CD4-positive, alpha-beta memory T cell (primary cell): ENCODE measurements at regions of chr19 and their contacts with region 1.

Region 1: GRCh38 chr19:7535035-7535992 is at the start of gene PNPLA6:
- DNase-seq: peak; percentile 89 to 93 (median 91)
- H3K4me3 ChIP-seq: peak within 1 kb of the TSS; percentile 80 to 93
- H3K4me3 Mint-ChIP-seq: peak within 1 kb of the TSS; percentile 90 to 98 (median 94)
- H3K27ac ChIP-seq: peak within 1 kb of the TSS; percentile 76
- H3K27ac Mint-ChIP-seq: peak within 1 kb of the TSS; percentile 93 to 98 (median 94)
- H3K4me1 ChIP-seq: peaks cover 25% of the 10 kb centered on the region
- H3K4me1 Mint-ChIP-seq: peaks cover 10 to 45% (median 26%) of the 10 kb centered on the region in 4 donors
- H3K27me3 ChIP-seq: no peaks in the 10 kb centered on the region
- H3K27me3 Mint-ChIP-seq: no peaks in the 10 kb centered on the region
- total RNA-seq, gene PNPLA6: 168 to 169 TPM

Region 2: GRCh38 chr19:7394731-7395359 is 140.5 kb before region 1 on chr19:
- CTCF ChIA-PET with region 1: no interaction called
- POLR2A ChIA-PET with region 1: no interaction called
- intact Hi-C with region 1: loop called (anchors 10 kb)
- DNase-seq: peak; percentile 88 to 95 (median 90)
- H3K4me3 ChIP-seq: peak overlapping the region in 1 of 2 donors; percentile 57
- H3K4me3 Mint-ChIP-seq: peak overlapping the region; percentile 84 to 92 (median 87)
- H3K27ac ChIP-seq: peak overlapping the region; percentile 58
- H3K27ac Mint-ChIP-seq: peak overlapping the region; percentile 78 to 96 (median 93)
- H3K4me1 ChIP-seq: peaks cover 46% of the 10 kb centered on the region
- H3K4me1 Mint-ChIP-seq: peaks cover 26 to 56% (median 34%) of the 10 kb centered on the region in 4 donors
- H3K27me3 ChIP-seq: no peaks in the 10 kb centered on the region
- H3K27me3 Mint-ChIP-seq: no peaks in the 10 kb centered on the region

Region 3: GRCh38 chr19:7515645-7516151 is 19.6 kb before region 1 on chr19 and contains the start of gene ZNF358:
- CTCF ChIA-PET with region 1: no interaction called
- POLR2A ChIA-PET with region 1: interaction called, 94 read pairs
- intact Hi-C with region 1: loop called (anchors 2 kb)
- DNase-seq: no peak
- H3K4me3 ChIP-seq: peak within 1 kb of the TSS in 1 of 2 donors; percentile 32
- H3K4me3 Mint-ChIP-seq: peak within 1 kb of the TSS; percentile 68 to 91 (median 85)
- H3K27ac ChIP-seq: no peak within 1 kb of the TSS
- H3K27ac Mint-ChIP-seq: peak within 1 kb of the TSS in 6 of 7 donors; percentile 38 to 95 (median 82)
- H3K4me1 ChIP-seq: peaks cover 10% of the 10 kb centered on the region
- H3K4me1 Mint-ChIP-seq: peaks cover 4 to 23% (median 11%) of the 10 kb centered on the region in 4 donors
- H3K27me3 ChIP-seq: peaks cover 4% of the 10 kb centered on the region
- H3K27me3 Mint-ChIP-seq: peaks cover 8 to 16% of the 10 kb centered on the region in 2 donors
- total RNA-seq, gene ZNF358: 8.4 to 8.7 TPM

Region 4: GRCh38 chr19:7629347-7630054 is 94.2 kb after region 1 on chr19 and contains the starts of genes PET100 and XAB2:
- CTCF ChIA-PET with region 1: no interaction called
- POLR2A ChIA-PET with region 1: interaction called, 10 read pairs
- intact Hi-C with region 1: no loop called
- DNase-seq: peak; percentile 93 to 98 (median 96)
- H3K4me3 ChIP-seq: peak within 1 kb of the TSS; percentile 81 to 96
- H3K4me3 Mint-ChIP-seq: peak within 1 kb of the TSS; percentile 95 to 99 (median 96)
- H3K27ac ChIP-seq: peak within 1 kb of the TSS; percentile 94
- H3K27ac Mint-ChIP-seq: peak within 1 kb of the TSS; percentile 92 to 100 (median 99)
- H3K4me1 ChIP-seq: peaks cover 31% of the 10 kb centered on the region
- H3K4me1 Mint-ChIP-seq: peaks cover 16 to 47% (median 34%) of the 10 kb centered on the region in 4 donors
- H3K27me3 ChIP-seq: no peaks in the 10 kb centered on the region
- H3K27me3 Mint-ChIP-seq: no peaks in the 10 kb centered on the region
- total RNA-seq, gene PET100: 120 to 144 TPM
- total RNA-seq, gene XAB2: 75.6 to 77.2 TPM

Region 5: DNA sequence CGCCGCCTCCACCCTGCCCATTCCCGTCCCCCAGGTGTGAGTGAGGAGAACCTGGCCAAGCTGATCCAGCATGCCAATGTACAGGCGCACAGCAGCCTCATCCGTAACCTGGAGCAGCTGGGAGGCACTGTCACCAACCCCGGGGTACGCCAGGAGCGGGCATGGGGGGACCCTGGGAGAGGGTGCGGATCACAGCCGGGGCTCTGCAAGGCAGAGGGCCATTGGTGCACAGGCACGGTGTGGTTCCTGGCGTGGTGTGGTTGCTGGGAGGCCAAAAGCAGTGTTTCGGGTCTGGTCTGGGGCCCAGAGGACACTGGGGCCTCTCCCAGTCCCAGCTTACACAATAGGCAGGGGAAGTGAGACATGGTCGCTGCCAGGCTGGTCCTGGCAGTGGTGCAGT is 109.8 kb after region 1 on chr19:
- CTCF ChIA-PET with region 1: no interaction called
- POLR2A ChIA-PET with region 1: no interaction called
- intact Hi-C with region 1: no loop called
- DNase-seq: no peak
- H3K4me3 ChIP-seq: no peak overlapping the region
- H3K4me3 Mint-ChIP-seq: no peak overlapping the region
- H3K27ac ChIP-seq: no peak overlapping the region
- H3K27ac Mint-ChIP-seq: no peak overlapping the region
- H3K4me1 ChIP-seq: no peaks in the 10 kb centered on the region
- H3K4me1 Mint-ChIP-seq: peaks cover 0 to 5% (median 2%) of the 10 kb centered on the region in 4 donors
- H3K27me3 ChIP-seq: no peaks in the 10 kb centered on the region
- H3K27me3 Mint-ChIP-seq: no peaks in the 10 kb centered on the region

Region 6: DNA sequence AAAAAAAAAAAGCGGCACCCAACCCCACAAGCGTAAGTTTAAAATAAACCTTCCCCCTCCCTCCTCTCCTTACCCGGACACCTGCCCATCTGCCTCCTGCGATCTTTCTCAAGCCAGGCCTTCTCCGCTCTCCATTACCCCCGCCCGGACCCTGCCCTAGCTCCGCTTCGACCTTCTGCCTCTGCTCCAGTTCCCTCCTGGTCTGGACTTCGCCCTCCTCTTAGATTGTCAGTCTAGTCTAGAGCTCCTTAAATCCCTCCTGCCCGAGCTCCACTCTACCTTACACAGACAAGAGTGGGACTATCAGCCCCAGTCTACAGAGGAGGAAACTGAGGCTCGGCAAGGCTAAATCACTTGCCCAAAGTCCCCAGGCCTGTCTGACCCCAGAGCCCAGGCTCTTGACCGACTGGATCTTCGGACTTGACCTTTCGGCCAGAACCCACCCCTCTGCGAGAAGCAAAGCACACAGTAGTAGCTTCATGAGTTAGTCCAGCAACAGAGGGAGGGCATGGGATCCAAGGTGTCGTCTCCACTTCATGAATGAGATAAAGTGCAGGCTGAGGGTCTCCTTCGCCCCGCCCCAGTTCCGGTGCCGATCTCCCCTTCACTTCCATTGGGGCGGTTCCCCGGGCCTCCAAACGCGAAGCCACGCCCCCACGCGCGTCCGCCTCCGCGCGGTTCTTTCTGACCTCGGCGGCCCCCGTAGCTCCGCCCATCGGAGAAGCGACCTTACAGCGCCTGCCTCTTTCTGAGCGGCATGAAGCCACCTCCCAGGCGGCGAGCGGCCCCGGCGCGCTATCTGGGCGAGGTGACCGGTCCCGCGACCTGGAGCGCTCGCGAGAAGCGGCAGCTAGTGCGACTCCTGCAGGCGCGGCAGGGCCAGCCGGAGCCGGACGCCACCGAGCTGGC is 384.6 kb after region 1 on chr19 and contains the start of gene SNAPC2:
- CTCF ChIA-PET with region 1: no interaction called
- POLR2A ChIA-PET with region 1: interaction called, 3 read pairs
- intact Hi-C with region 1: loop called (anchors 1 kb)
- DNase-seq: peak; percentile 96 to 99 (median 97)
- H3K4me3 ChIP-seq: peak within 1 kb of the TSS; percentile 71 to 76
- H3K4me3 Mint-ChIP-seq: peak within 1 kb of the TSS; percentile 88 to 97 (median 92)
- H3K27ac ChIP-seq: peak within 1 kb of the TSS; percentile 76
- H3K27ac Mint-ChIP-seq: peak within 1 kb of the TSS; percentile 85 to 96 (median 94)
- H3K4me1 ChIP-seq: peaks cover 53% of the 10 kb centered on the region
- H3K4me1 Mint-ChIP-seq: peaks cover 14 to 59% (median 38%) of the 10 kb centered on the region in 4 donors
- H3K27me3 ChIP-seq: peaks cover 13% of the 10 kb centered on the region
- H3K27me3 Mint-ChIP-seq: peaks cover 15 to 26% of the 10 kb centered on the region in 2 donors
- total RNA-seq, gene SNAPC2: 16.3 to 18.9 TPM